GM10248 (cell line): ENCODE measurements at regions of chr14 and their contacts with region 1.

Region 1: GRCh38 chr14:53956427-53957201 is at the start of gene BMP4:
- DNase-seq: peak; percentile 47
- CTCF ChIP-seq: no peak

Region 2: DNA sequence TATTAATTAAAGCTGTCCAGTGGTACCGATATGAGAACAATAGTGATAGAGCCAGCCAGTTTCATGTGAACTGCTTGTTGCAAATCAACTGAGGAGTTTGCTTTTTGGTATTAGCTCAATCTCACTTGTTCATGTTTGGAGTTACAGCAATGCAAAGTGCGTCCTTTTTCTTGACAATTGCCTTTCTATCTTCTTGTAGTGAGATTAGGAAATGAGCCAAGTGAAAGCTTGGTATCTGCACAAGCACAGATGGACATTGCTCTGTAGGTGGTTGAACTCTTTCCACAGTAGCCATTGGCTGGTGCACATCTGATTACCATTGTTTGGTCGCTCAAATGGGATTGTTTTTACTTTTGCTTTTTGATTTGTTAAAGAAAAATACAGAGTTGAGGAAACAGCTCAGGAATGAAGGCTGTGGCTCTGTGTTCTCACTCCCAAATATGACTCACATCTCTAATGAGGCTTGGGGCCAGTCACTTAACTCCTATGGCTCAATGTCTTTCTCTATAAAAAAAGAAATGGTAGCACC is 241.4 kb before region 1 on chr14:
- CTCF ChIA-PET with region 1: no interaction called
- POLR2A ChIA-PET with region 1: no interaction called
- DNase-seq: no peak
- CTCF ChIP-seq: no peak

Region 3: DNA sequence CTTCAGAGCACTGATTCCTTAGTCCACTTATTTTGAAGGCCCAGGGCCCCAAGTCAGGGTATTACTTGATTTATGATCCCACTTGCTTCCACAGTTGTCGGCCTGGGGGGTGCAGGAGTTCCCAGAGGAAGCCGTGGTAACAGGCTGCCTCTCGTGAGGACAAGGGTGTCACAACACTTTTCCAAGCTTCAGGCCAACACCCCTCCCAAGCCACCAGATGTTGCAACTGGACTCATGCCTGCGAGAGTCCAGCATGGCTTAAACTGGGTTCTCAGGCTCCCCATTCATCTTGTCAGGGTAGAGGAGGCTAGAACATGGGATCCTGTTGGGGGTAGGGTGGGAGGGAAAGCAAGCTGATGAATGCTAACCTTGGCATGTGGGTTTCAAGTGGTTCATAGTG is 56.1 kb before region 1 on chr14:
- CTCF ChIA-PET with region 1: no interaction called
- POLR2A ChIA-PET with region 1: no interaction called
- DNase-seq: no peak
- CTCF ChIP-seq: no peak

Region 4: GRCh38 chr14:53924754-53925153 is 31.9 kb before region 1 on chr14:
- CTCF ChIA-PET with region 1: no interaction called
- POLR2A ChIA-PET with region 1: no interaction called
- DNase-seq: no peak
- CTCF ChIP-seq: no peak

Region 5: GRCh38 chr14:53968726-53969125 is 12.1 kb after region 1 on chr14:
- CTCF ChIA-PET with region 1: interaction called, 28 read pairs
- POLR2A ChIA-PET with region 1: interaction called, 5 read pairs
- DNase-seq: no peak
- CTCF ChIP-seq: no peak

Region 6: GRCh38 chr14:53999061-53999488 is 42.5 kb after region 1 on chr14:
- CTCF ChIA-PET with region 1: no interaction called
- POLR2A ChIA-PET with region 1: no interaction called
- DNase-seq: no peak
- CTCF ChIP-seq: no peak